CD8-positive, alpha-beta memory T cell (primary cell): ENCODE measurements at regions of chr1 and their contacts with region 1.

Region 1: DNA sequence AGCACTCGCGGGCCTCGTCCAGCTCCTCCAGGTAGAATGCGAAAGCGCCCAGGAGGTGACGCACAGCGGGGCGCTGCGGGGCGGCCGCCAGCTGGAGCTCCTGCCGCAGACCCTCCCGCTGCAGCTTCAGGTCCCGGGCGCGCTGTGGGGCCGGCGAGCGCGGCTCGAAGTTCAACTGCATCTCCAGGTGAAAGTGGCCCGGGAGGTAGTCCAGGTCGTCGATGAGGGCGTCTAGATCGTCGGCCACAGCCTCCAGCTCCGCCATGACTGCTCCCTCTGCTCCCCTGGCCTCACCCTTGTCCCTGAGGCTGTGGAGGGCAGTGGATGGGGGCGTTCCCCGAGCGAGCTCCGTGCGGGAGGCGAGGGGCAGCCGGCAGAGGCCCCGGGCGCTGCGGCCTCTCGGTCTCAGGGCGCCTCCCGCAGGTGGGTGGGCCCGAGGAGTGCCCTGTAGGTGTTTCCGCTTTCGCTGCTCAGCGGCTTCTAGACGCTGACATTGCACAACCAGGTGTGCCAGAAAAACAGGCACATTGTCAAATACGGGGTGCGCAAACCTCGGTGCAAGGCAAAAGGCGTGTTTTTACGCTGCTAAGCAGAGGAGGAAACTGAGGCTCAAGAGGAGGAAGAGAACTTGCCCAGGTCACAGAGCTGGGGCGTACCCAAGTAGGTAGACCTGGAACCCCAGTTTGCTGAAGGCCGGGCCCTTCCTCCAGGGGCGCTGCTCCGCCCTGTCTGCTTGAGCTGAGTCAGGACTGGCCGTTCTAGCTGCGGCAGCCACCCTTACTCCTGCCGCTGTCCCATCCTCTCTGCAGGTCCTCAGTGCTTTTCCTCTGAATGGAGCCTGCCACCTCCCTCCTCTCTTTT is at the start of gene TTC22:
- DNase-seq: peak; percentile 54 to 81 (median 62)
- H3K4me3 ChIP-seq: peak within 1 kb of the TSS; percentile 93
- H3K4me3 Mint-ChIP-seq: peak within 1 kb of the TSS; percentile 94 to 99 (median 97)
- H3K27ac ChIP-seq: peak within 1 kb of the TSS; percentile 78
- H3K27ac Mint-ChIP-seq: peak within 1 kb of the TSS; percentile 90 to 98 (median 96)
- H3K4me1 ChIP-seq: peaks cover 49% of the 10 kb centered on the region
- H3K4me1 Mint-ChIP-seq: peaks cover 65 to 73% (median 71%) of the 10 kb centered on the region in 3 donors
- H3K27me3 ChIP-seq: no peaks in the 10 kb centered on the region
- H3K27me3 Mint-ChIP-seq: peaks cover 0 to 1% of the 10 kb centered on the region in 2 donors
- total RNA-seq, gene TTC22: 2.8 to 2.9 TPM

Region 2: DNA sequence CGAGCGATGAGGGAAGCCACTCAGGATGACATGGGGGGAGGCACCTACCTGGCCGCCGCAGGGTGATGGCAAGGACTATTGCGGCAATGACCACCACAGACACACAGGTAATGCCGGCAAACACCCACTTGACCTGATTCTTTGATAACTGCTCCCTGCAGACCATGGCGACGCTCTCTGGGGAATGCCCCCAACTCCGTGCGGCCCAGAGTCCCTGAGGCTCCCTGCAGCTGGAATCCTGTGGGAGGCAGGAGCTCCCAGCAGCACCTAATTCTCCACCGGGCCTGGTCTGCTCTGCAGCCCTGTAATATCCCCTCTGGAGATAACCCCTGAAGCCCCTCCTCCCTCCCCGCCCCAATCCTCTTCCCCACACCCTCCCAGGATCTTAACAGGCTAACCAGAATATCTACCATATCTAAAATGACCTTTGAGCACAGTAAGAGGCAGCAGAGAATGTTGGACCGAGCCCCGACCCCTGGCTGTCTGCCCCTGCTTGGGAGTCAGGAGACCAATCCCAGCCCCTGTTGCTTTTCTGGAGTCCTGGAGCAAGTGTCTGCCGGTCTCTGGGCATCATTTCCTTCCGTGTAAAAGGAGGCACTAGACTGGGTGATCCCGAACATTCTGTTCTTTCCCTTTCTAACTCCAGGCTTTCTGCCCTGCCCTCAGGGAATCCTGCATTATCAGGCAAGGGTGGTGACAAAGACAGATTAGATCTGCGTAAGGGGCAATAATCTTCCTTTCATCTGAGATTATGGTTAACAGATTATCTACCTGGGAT is 177.7 kb before region 1 on chr1 and contains the start of gene FAM151A:
- CTCF ChIA-PET with region 1: no interaction called
- POLR2A ChIA-PET with region 1: no interaction called
- DNase-seq: peak in 1 of 5 donors; percentile 12
- H3K4me3 ChIP-seq: no peak within 1 kb of the TSS
- H3K4me3 Mint-ChIP-seq: no peak within 1 kb of the TSS
- H3K27ac ChIP-seq: no peak within 1 kb of the TSS
- H3K27ac Mint-ChIP-seq: peak within 1 kb of the TSS in 1 of 8 donors; percentile 32
- H3K4me1 ChIP-seq: no peaks in the 10 kb centered on the region
- H3K4me1 Mint-ChIP-seq: no peaks in the 10 kb centered on the region
- H3K27me3 ChIP-seq: peaks cover 3% of the 10 kb centered on the region
- H3K27me3 Mint-ChIP-seq: peaks cover 2 to 20% of the 10 kb centered on the region in 2 donors
- total RNA-seq, gene FAM151A: not detected

Region 3: GRCh38 chr1:54671985-54672608 is 129.0 kb before region 1 on chr1:
- CTCF ChIA-PET with region 1: interaction called, 22 read pairs
- POLR2A ChIA-PET with region 1: no interaction called
- DNase-seq: peak; percentile 48 to 70 (median 54)
- H3K4me3 ChIP-seq: no peak overlapping the region
- H3K4me3 Mint-ChIP-seq: no peak overlapping the region
- H3K27ac ChIP-seq: no peak overlapping the region
- H3K27ac Mint-ChIP-seq: peak overlapping the region in 5 of 8 donors; percentile 20 to 67 (median 34)
- H3K4me1 ChIP-seq: no peaks in the 10 kb centered on the region
- H3K4me1 Mint-ChIP-seq: peaks cover 5 to 7% (median 6%) of the 10 kb centered on the region in 3 donors
- H3K27me3 ChIP-seq: no peaks in the 10 kb centered on the region
- H3K27me3 Mint-ChIP-seq: peaks cover 0 to 3% of the 10 kb centered on the region in 2 donors

Region 4: DNA sequence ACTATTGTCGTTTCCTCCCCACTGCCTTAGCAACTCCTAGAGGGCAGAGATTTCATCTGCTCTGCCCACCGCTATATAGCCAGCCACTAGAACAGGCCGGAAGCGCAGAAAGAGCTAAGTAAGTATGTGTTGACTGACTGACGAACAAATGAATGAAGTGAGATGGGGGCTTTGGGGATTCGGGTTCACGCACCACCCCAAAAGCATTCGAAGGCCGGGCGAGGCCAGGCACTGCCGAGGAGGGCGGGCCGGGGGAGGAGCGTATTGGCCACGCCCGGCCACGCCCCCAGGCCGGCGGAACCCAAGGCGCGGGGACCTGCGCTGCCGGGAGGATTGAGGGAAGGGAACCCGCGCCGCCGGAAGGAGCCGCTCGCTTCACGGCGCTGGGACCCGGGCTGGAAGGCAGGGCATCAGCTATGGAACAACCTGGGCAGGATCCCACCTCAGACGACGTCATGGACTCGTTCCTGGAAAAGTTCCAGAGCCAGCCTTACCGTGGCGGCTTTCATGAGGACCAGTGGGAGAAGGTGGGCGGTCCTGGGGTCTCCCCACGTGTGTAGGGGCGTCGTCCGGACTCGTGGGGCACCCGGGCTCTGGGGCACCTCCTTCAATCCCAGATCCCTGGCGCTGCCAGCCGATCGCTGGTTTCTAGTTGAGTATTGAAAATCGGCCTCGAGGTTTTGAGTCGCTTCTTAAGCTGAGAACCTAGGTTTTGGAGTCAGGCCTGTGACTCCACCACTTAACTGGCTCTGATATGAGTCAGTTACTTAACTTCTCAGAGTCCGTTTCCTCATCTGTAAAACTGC is 85.4 kb before region 1 on chr1 and contains the start of gene TTC4:
- CTCF ChIA-PET with region 1: interaction called, 11 read pairs
- POLR2A ChIA-PET with region 1: interaction called, 3 read pairs
- DNase-seq: peak; percentile 71 to 85 (median 81)
- H3K4me3 ChIP-seq: peak within 1 kb of the TSS; percentile 99
- H3K4me3 Mint-ChIP-seq: peak within 1 kb of the TSS; percentile 83 to 96 (median 89)
- H3K27ac ChIP-seq: peak within 1 kb of the TSS; percentile 66
- H3K27ac Mint-ChIP-seq: peak within 1 kb of the TSS; percentile 30 to 98 (median 89)
- H3K4me1 ChIP-seq: peaks cover 16% of the 10 kb centered on the region
- H3K4me1 Mint-ChIP-seq: peaks cover 24 to 41% (median 35%) of the 10 kb centered on the region in 3 donors
- H3K27me3 ChIP-seq: no peaks in the 10 kb centered on the region
- H3K27me3 Mint-ChIP-seq: no peaks in the 10 kb centered on the region
- total RNA-seq, gene TTC4: 47.0 to 47.5 TPM

Region 5: DNA sequence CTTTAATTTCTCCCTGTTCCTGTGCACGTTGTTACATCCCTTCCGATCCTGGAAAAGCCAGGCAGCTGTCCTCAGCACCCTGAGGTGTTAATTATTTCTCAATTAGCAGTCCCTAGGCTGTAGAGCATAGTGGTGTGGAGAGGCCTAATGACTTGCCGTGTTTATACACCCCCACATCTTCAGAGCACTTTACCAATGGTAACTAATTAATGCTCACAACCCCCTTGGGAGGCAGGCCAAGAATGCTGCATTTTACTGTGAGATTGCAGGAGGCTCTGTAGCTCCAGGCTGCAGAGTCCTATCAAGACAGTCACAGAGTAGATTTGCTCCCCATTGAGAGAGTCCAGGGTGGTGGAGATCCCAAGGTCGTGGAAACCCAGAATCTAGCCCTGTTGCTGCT is 34.4 kb before region 1 on chr1:
- CTCF ChIA-PET with region 1: interaction called, 13 read pairs
- POLR2A ChIA-PET with region 1: interaction called, 4 read pairs
- DNase-seq: no peak
- H3K4me3 ChIP-seq: no peak overlapping the region
- H3K4me3 Mint-ChIP-seq: peak overlapping the region in 1 of 7 donors; percentile 22
- H3K27ac ChIP-seq: no peak overlapping the region
- H3K27ac Mint-ChIP-seq: peak overlapping the region in 2 of 8 donors; percentile 6 to 65
- H3K4me1 ChIP-seq: peaks cover 10% of the 10 kb centered on the region
- H3K4me1 Mint-ChIP-seq: peaks cover 14 to 22% (median 21%) of the 10 kb centered on the region in 3 donors
- H3K27me3 ChIP-seq: no peaks in the 10 kb centered on the region
- H3K27me3 Mint-ChIP-seq: no peaks in the 10 kb centered on the region